H1 (cell line): ENCODE measurements at regions of chr11 and their contacts with region 1.

Region 1: GRCh38 chr11:64652586-64653387 is 61.8 kb downstream of the SLC22A12 start:
- DNase-seq: peak; percentile 67 to 99
- H3K4me3 ChIP-seq: peak overlapping the region in 1 of 4 experiments; percentile 15; a peak in 1 of 8 replicates
- H3K27ac ChIP-seq: no peak overlapping the region
- H3K4me1 ChIP-seq: peaks cover 0 to 8% (median 5%) of the 10 kb centered on the region in 4 experiments; a peak in 3 of 7 replicates
- H3K27me3 ChIP-seq: peaks cover 0 to 5% (median 2%) of the 10 kb centered on the region in 4 experiments; a peak in 3 of 7 replicates
- CTCF ChIP-seq: peak; percentile 93 to 97 (median 94)
- EP300 ChIP-seq: no peak
- POLR2A ChIP-seq: no peak
- RAD21 ChIP-seq: peak; percentile 81 to 87

Region 2: DNA sequence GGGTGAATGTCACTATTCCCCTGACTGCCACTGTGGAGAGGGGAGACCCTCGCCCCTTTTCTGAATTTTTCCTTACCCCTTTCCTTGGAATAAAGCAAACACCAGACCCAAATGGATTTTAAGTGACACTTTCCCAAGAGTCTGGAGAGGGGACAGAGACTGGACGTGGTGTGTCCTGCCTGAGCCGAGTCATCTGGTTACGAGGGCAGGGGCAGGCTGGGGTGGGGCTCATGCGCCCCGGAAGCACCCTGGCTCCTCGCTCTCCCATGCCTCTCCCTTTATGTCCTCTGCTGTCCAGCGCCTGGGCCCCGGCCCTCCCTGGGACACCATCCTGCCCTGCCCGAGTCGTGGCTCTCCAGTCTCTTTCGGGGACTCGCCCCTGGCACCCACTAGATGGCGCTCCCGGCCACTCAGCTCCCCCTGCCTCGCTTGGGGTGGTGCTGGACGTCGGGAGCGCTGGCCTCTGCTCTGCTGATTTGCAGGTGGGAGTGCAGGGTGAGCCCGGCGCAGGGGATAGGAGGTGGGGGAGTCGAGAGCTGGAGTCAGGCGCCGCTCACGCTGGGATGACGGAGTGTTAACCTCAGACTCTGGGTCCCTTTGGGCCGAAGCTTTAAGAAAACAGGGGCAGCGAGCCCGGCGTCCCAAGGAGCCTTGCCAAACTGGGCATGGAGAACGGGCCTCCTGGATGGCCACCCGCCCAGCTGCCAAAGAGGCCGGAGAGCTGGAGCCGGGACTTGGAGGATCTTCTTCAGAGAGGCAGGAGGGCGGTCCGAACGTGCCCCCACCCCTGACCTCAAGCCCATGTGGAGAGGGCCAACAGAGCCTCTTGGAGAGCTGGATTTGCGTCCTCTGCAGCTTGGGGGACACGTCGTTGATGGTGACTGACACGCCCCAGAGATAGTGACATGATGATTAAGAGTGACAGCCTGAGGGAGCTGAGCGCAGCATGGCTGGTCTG is 203.9 kb before region 1 on chr11:
- CTCF ChIA-PET with region 1: interaction called, 165 read pairs
- POLR2A ChIA-PET with region 1: interaction called, 4 read pairs
- DNase-seq: peak; percentile 50 to 94
- H3K4me3 ChIP-seq: peak overlapping the region; percentile 18 to 60 (median 37); a peak in 7 of 8 replicates
- H3K27ac ChIP-seq: no peak overlapping the region
- H3K4me1 ChIP-seq: peaks cover 5 to 10% (median 7%) of the 10 kb centered on the region in 4 experiments; a peak in 6 of 7 replicates
- H3K27me3 ChIP-seq: peaks cover 0 to 13% (median 9%) of the 10 kb centered on the region in 4 experiments; a peak in 5 of 7 replicates
- CTCF ChIP-seq: peak; percentile 79 to 91 (median 83)
- EP300 ChIP-seq: no peak
- POLR2A ChIP-seq: no peak
- RAD21 ChIP-seq: peak; percentile 70 to 77

Region 3: DNA sequence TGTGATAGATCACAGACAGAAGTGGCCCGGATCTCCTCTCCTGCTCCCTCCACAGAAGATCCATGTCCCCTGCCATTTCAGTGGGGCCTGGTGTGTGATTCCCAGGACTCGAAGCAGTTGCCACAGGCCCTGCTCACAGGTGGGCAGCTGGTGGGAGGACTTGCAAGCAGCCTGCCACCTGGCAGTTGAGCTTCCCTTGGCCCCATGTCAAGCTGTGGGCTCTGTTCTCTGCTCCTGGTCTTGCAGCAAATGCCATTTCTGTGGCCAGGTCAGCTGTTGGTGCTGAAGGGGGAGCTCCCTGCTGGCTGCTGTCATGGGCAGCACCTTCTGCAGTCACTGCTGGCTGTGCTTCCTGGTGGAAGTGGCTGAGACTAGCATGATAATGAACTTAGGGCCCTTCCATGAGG is 120.9 kb before region 1 on chr11:
- CTCF ChIA-PET with region 1: interaction called, 32 read pairs
- POLR2A ChIA-PET with region 1: no interaction called
- DNase-seq: no peak
- H3K4me3 ChIP-seq: no peak overlapping the region
- H3K27ac ChIP-seq: no peak overlapping the region
- H3K4me1 ChIP-seq: no peaks in the 10 kb centered on the region
- H3K27me3 ChIP-seq: peaks cover 0 to 5% (median 1%) of the 10 kb centered on the region in 4 experiments; a peak in 3 of 7 replicates
- CTCF ChIP-seq: no peak
- EP300 ChIP-seq: no peak
- POLR2A ChIP-seq: no peak
- RAD21 ChIP-seq: no peak

Region 4: DNA sequence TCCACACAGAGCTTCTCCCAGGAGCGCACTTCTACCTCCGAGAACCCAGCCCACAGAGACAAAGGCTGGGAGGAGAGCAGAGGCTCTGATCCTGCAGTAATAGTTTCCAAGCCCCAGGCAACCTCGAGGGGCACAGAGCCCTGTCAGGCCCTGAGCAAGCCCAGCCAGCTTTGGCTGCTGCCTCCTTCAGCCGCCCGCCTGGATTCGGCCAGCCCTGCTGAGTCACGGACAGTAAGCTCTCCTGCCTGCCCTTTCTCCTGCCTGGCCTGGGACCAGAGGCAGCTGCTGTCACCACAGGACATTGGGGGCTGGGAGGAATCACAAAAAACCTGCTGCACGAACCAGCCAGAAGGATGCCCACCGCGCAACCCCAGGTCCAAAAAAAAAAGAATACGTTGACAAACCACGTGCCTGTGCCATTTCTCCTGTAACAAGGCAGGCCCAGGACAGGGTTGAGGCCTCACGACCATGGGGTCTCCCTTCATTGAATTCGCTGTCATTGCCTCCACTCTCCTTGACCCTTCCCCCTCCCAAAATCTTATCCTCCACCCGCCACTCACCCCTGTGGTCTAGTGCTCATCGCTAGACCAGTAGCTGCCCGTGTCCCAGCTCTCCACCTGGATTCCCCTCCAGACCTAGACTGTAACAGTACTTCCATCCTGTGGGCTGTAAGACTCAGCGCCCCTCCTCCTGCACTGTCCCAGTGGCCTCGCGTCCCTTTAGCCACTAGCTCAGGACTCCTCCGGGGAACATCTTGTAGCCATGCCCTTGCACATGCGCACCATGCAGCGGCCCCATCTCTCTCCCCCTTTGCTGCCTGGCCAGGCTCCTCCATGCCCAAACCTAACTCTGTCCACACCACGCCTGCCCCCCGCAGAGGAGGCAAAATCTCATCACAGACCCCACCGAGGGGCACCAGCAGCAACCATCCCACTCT is 69.2 kb before region 1 on chr11:
- CTCF ChIA-PET with region 1: interaction called, 29 read pairs
- POLR2A ChIA-PET with region 1: interaction called, 3 read pairs
- DNase-seq: no peak
- H3K4me3 ChIP-seq: no peak overlapping the region
- H3K27ac ChIP-seq: no peak overlapping the region
- H3K4me1 ChIP-seq: no peaks in the 10 kb centered on the region
- H3K27me3 ChIP-seq: no peaks in the 10 kb centered on the region; a peak in 2 of 7 replicates
- CTCF ChIP-seq: no peak
- EP300 ChIP-seq: no peak
- POLR2A ChIP-seq: no peak
- RAD21 ChIP-seq: no peak

Region 5: GRCh38 chr11:64665411-64665821 is 12.6 kb after region 1 on chr11:
- CTCF ChIA-PET with region 1: interaction called, 68 read pairs
- POLR2A ChIA-PET with region 1: no interaction called
- DNase-seq: no peak
- H3K4me3 ChIP-seq: no peak overlapping the region
- H3K27ac ChIP-seq: no peak overlapping the region
- H3K4me1 ChIP-seq: peaks cover 0 to 11% (median under 1%) of the 10 kb centered on the region in 4 experiments; a peak in 4 of 7 replicates
- H3K27me3 ChIP-seq: no peaks in the 10 kb centered on the region
- CTCF ChIP-seq: no peak
- EP300 ChIP-seq: no peak
- POLR2A ChIP-seq: no peak
- RAD21 ChIP-seq: no peak

Region 6: GRCh38 chr11:64713031-64713780 is 60.4 kb after region 1 on chr11:
- CTCF ChIA-PET with region 1: interaction called, 30 read pairs
- POLR2A ChIA-PET with region 1: no interaction called
- DNase-seq: no peak
- H3K4me3 ChIP-seq: peak overlapping the region; percentile 28 to 55 (median 42)
- H3K27ac ChIP-seq: no peak overlapping the region
- H3K4me1 ChIP-seq: peaks cover 12 to 28% (median 20%) of the 10 kb centered on the region in 4 experiments
- H3K27me3 ChIP-seq: peaks cover 12 to 49% (median 33%) of the 10 kb centered on the region in 4 experiments
- CTCF ChIP-seq: no peak
- EP300 ChIP-seq: no peak
- POLR2A ChIP-seq: no peak
- RAD21 ChIP-seq: no peak